HEK293T (cell line): ENCODE measurements at regions of chr22 and their contacts with region 1.

Region 1: GRCh38 chr22:37199103-37199759 is 11.2 kb upstream of the C1QTNF6 start:
- DNase-seq: peak; percentile 100

Region 2: DNA sequence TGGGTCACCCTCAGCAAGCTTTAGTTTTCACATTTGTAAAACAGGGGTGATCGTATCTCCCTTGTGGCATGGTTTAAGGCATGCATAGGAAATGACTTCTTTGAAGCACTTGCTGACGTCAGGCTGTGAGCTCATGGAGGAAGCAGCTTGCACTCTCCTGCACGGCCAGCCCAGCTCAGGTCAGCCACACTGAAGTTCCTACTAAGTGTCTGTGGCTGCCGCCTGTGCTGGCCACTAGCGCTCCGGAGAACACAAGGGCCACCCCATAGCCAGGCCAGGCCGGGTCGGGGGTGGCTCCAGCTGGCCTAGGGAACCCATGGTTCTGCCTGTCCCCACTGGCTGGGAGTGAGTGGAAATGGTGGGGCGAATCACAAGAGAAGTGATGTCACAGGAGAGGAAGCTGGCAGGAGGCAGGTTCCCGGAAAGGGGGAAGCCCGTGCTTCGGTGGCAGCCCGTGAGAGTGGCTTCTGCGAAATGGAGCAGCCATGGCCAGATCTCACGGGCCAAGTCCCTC is 119.5 kb before region 1 on chr22:
- CTCF ChIA-PET with region 1: interaction called, 14 read pairs
- POLR2A ChIA-PET with region 1: interaction called, 6 read pairs
- DNase-seq: no peak

Region 3: DNA sequence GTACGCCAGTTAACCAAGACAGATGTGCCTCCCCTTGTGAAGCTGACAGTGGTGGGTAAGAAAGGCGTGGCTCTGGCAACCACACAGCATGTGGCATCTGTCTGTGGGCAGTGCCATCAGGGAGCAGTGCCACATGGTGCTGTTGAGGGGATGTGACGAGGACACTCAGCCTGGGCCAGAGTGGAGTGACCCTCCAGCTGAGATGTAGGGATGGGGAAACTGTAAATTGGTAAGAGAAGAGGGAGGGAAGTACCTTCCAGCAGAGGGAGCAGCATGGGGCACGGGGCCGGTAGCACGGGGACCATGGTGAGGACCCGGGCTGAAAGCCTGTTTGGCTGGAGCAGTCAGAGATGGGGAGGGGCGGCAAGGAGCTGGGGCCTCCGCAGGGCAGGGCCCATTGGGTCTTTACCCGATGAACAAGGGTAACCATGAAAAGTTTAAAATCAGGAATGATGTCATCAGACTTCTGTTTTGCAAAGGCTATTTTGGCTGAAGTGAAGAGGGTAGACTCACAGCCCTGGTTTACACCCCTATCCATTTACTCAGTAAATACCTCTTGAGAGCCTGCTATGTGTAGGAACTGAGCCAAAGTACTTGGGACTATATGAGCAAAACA is 100.1 kb before region 1 on chr22:
- CTCF ChIA-PET with region 1: no interaction called
- POLR2A ChIA-PET with region 1: no interaction called
- DNase-seq: peak; percentile 34

Region 4: GRCh38 chr22:37210041-37210803 is 11.0 kb after region 1 on chr22:
- CTCF ChIA-PET with region 1: interaction called, 11 read pairs
- POLR2A ChIA-PET with region 1: interaction called, 4 read pairs
- DNase-seq: no peak

Region 5: DNA sequence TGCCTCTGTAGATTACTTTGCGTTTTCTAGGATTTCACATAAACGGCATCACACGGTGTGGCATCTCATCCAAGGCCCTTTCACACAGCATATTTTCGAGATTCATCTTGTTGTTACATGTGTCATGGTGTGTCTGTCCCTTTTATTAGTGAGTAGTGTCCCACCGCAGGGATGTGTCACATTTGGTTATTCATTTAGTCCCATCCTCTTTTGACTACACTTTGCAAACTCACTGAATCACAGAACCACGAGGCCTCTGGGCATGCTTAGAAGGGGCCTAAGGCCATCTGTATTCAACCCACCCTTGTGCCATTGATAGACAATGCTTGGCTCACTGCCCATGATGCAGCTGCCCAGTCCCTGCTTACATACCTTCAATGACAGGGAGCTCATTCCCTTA is 49.0 kb after region 1 on chr22:
- CTCF ChIA-PET with region 1: no interaction called
- POLR2A ChIA-PET with region 1: no interaction called
- DNase-seq: no peak